Aorta (tissue), 5 donors: ENCODE measurements at regions of chr13 and their contacts with region 1.

Region 1: GRCh38 chr13:43905435-43906031 is 25.8 kb downstream of the LACC1 start:
- DNase-seq: no peak
- ATAC-seq: peak; percentile 85
- H3K4me3 ChIP-seq: no peak overlapping the region
- H3K27ac ChIP-seq: no peak overlapping the region
- H3K4me1 ChIP-seq: peaks cover 0 to 2% of the 10 kb centered on the region in 2 donors
- H3K27me3 ChIP-seq: no peaks in the 10 kb centered on the region

Region 2: DNA sequence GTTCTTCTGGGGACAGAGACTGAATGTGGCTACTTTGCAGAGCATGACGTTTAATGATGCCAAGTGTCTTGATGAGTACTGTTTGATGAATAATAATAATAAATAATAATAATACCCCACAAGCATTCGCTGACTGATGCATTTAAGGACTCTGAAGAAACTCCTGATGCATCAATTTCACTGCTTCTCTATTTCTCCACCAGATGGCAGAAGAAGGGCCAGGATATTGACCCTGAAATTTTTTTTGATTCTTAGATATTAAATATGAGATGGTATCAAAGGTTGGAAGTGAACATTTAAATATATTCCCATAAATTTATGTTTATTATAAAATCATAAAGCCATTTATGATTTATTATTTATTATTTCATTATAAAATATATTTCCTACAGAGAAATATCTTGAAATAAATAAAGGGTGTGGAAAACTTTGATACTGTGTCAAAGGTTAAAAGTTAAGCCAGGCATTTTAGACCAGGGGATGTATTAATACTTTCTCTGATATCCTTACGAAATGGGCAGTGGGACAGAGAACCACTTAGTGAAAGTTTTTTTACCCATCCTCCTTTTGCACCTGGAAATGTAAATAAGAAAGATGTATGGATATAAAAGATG is 145.0 kb after region 1 on chr13:
- intact Hi-C with region 1: loop called in 1 of 2 experiments (anchors 5 kb)
- DNase-seq: no peak
- ATAC-seq: no peak
- H3K4me3 ChIP-seq: no peak overlapping the region
- H3K27ac ChIP-seq: no peak overlapping the region
- H3K4me1 ChIP-seq: peaks cover 3 to 5% of the 10 kb centered on the region in 2 donors
- H3K27me3 ChIP-seq: no peaks in the 10 kb centered on the region

Region 3: GRCh38 chr13:44470638-44471562 is 565.4 kb after region 1 on chr13:
- intact Hi-C with region 1: loop called (anchors 5 kb)
- DNase-seq: no peak
- ATAC-seq: no peak
- H3K4me3 ChIP-seq: no peak overlapping the region
- H3K27ac ChIP-seq: no peak overlapping the region
- H3K4me1 ChIP-seq: peaks cover 0 to 4% of the 10 kb centered on the region in 2 donors
- H3K27me3 ChIP-seq: no peaks in the 10 kb centered on the region

Region 4: GRCh38 chr13:44969551-44970484 is 1064.3 kb after region 1 on chr13:
- intact Hi-C with region 1: loop called (anchors 5 to 10 kb)
- DNase-seq: no peak
- ATAC-seq: peak; percentile 73
- H3K4me3 ChIP-seq: no peak overlapping the region
- H3K27ac ChIP-seq: no peak overlapping the region
- H3K4me1 ChIP-seq: peaks cover 0 to 2% of the 10 kb centered on the region in 2 donors
- H3K27me3 ChIP-seq: no peaks in the 10 kb centered on the region